ENCODE measurements at regions of chr10 and their contacts with region 1.

Region 1: DNA sequence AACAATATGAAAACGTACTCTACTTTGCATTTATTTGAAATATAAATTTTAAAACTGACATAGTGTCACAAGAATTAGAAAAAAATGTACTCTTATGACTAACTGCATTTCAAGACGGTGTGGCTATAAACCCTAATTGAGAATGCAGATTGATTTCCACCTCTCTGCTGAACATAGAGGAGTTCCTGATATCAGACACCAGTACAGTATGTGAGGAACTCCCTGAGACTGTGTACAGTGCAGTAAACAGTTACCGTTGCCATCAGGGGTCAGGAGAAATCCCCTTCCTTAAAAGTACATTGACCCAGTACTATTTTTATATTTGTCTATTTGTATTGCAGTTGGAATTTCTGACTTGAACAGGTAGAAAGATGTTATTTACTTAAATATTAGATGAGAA is 61.8 kb upstream of the DKK1 start:
- DNase-seq: no peak
- ATAC-seq: no peak
- H3K4me3 Mint-ChIP-seq: no peak overlapping the region
- H3K27ac Mint-ChIP-seq: no peak overlapping the region
- H3K4me1 Mint-ChIP-seq: no peaks in the 10 kb centered on the region
- H3K27me3 Mint-ChIP-seq: no peaks in the 10 kb centered on the region

Region 2: GRCh38 chr10:52232561-52233350 is 19.6 kb before region 1 on chr10:
- CTCF ChIA-PET with region 1: no interaction called
- POLR2A ChIA-PET with region 1: no interaction called
- intact Hi-C with region 1: loop called in 1 of 2 experiments (anchors 2 kb)
- DNase-seq: no peak
- ATAC-seq: no peak
- H3K4me3 Mint-ChIP-seq: peak overlapping the region; percentile 36
- H3K27ac Mint-ChIP-seq: no peak overlapping the region
- H3K4me1 Mint-ChIP-seq: peaks cover 6% of the 10 kb centered on the region
- H3K27me3 Mint-ChIP-seq: peaks cover 5% of the 10 kb centered on the region

Measured in activated CD4-positive, alpha-beta T cell treated with anti-CD3 and anti-CD28 coated beads for 36 hours (primary cell).